ENCODE measurements at regions of chr12 and their contacts with region 1.

Region 1: GRCh38 chr12:45200491-45201043 is 15.3 kb upstream of the ANO6 start:
- DNase-seq: peak in 2 of 3 donors; percentile 59 to 64
- H3K4me3 ChIP-seq: peak overlapping the region in 5 of 7 experiments; percentile 20 to 70 (median 35)
- H3K27ac ChIP-seq: no peak overlapping the region
- H3K4me1 ChIP-seq: peaks cover 10 to 28% (median 17%) of the 10 kb centered on the region in 4 experiments
- H3K27me3 ChIP-seq: no peaks in the 10 kb centered on the region

Region 2: DNA sequence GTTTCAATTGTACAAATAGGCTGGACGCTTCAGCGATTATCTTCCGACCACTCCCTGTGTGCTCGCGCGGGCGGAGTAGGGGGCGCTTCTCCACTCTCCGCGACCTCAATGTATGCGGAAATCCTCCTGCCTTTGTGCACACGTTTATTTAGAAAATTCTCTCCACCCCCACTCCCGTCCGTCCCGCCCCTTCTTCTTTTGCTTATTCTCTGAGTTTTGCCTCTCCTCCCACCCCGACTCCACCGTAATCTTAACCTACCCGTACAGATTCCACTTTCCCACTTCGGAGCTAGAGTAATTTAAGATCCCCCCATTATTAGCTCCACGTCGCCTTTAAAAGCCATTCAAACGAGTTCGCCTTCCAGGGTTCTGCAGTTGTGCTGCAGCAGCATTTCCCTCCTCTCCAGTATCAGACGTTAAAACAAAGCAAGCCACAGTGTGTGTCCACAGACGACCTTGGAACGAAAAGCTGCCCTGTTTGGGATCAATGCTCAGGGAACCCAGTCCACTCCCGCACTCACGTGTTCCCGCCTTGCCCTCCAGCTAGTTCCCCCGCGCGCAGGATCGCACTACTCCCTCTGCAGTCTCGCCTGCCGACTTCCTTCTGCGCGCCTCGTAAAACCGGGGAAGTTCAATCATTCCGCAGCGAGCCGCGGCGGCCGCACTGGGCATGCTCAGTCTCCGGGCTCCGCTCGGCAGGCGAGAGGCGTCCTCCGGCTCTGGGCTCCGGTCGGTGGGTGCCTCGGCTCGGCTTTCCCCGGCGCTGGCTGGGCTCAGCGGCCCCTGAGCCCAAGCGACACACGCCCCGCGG is 15.1 kb after region 1 on chr12 and contains the start of gene ANO6:
- CTCF ChIA-PET with region 1: interaction called, 13 read pairs
- POLR2A ChIA-PET with region 1: no interaction called
- DNase-seq: peak; percentile 89 to 92 (median 89)
- H3K4me3 ChIP-seq: peak within 1 kb of the TSS; percentile 83 to 98 (median 93)
- H3K27ac ChIP-seq: peak within 1 kb of the TSS; percentile 66 to 89
- H3K4me1 ChIP-seq: peaks cover 9 to 35% (median 18%) of the 10 kb centered on the region in 4 experiments
- H3K27me3 ChIP-seq: no peaks in the 10 kb centered on the region